ENCODE measurements at regions of chr22 and their contacts with region 1.

Region 1: DNA sequence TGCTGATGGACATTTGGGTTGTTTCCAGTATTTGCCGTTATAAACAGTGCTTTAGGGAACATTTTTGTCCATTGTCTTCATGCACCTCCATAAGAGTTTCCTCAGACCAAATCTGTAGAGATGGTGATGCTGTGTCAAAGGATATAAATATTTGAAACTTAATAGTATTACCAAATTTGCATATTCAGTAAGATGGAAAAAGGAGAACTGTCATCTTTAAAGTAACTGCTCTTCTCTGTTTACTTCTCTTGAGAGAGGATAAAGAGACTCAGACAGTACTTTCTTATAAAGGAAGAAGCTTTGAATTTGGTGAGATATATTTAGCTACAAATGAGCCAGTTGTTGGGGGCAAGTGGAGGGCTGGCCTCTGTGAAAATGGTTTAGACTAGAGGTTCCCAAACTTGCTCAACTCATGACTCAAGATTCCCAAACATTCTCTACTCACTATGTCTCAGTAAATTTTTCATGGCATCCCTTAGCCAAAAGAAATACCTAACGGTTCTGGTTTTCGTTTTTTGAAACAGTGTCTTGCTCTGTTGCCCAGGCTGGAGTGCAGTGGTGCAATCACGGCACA is 26.2 kb downstream of the SHISA8 start:
- DNase-seq: no peak

Region 2: DNA sequence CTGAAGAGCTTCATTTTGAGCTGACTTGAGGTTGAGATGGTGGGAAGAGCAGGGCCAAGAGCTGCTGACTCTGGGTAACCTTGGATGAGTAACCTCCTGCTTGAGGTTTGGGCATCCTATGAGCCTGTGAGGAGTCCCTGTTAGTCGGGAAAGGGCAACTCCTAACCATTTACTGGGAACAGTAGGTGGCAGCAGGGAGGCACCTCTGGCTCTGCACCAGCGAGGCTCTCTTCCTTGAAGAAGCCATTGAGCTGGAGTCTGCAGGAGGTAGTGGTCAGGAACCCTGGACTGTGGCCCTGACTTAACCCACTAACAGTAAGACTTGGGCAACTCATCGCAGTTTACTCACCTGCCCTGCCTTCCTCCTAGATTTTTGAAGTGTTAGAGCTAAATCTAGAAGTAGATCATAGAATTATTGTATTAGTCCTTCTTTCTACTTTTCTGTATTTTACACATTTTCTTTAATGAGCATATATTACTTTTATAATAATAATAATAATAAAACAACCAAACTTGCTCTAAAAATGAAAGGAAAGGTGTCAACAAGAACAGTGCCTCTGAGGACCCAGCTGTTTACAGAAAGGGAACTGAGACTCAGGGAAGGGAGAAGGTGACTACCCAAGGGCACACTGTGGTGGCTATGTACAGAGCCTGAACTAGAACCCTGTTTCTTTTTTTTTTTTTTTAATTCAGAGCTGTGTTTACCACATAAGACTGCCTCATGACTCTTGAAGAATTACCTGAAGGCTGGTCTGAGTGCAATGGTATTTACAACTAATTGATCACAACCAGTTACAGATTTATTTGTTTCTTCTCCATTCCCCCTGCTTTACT is 141.9 kb before region 1 on chr22:
- in situ Hi-C with region 1: loop called (anchors 25 kb)
- DNase-seq: peak; percentile 88

Region 3: GRCh38 chr22:41793871-41794270 is 94.8 kb before region 1 on chr22:
- in situ Hi-C with region 1: no loop called
- DNase-seq: no peak

Region 4: GRCh38 chr22:42114721-42115120 is 226.0 kb after region 1 on chr22:
- in situ Hi-C with region 1: loop called (anchors 10 kb)
- DNase-seq: peak; percentile 22

Measured in G401 (cell line).